ENCODE measurements at regions of chr20 and their contacts with region 1.

Region 1: DNA sequence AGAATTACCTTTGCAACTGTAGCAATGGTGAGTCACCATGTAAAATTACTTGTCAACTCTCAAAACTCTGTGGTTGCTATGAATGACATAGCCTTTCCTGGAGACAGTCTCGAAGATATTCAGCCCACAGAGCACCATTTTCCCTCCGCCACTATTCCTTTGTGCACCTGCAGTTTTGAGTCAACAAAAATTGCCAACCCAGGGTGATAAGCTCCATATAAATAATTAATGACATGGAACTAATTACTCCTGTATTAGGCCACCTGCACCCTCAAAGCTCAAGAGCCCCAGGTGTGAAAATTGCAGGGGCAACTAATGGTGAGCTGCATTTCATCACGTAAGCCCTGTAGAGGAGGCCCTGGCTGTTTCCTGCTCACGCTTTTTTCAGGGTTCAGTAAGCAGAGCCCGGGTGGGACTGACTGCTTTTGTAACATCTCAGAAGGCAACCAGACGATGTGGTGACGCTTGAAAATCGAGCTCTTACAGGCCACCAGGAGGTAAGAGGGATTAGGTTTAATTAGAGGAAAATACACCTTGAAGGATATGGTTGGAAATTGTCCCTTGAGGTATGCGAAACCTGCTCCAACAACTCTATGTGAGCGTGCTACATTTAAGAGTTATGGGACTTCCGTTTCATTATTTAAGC is 70.8 kb downstream of the BMP2 start:
- DNase-seq: peak; percentile 25
- ATAC-seq: peak; percentile 84
- H3K4me3 ChIP-seq: no peak overlapping the region
- H3K27ac ChIP-seq: no peak overlapping the region
- H3K4me1 ChIP-seq: no peaks in the 10 kb centered on the region
- H3K27me3 ChIP-seq: no peaks in the 10 kb centered on the region
- CTCF ChIP-seq: no peak
- EP300 ChIP-seq: peak; percentile 18 to 60; a peak in 2 of 4 replicates
- POLR2A ChIP-seq: no peak
- RAD21 ChIP-seq: no peak

Region 2: DNA sequence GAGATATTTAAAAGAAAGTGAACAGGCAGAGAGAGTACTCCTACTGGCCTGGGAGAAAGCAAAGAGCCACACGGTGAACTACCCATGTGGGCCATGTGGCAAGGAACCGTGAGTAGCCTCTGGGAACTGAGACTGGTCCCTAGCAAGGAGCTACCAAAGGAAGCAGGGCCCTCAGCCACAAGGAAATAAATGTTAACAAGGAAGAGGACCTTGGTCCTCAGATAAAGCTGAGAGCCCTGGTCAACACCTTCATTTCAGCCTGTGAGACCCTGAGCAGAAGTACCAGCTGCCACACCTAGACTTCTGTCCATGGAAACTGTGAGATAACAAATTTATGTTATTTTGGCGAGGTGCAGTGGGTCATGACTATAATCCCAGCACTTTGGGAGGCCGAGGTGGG is 45.5 kb before region 1 on chr20:
- CTCF ChIA-PET with region 1: no interaction called
- POLR2A ChIA-PET with region 1: no interaction called
- RAD21 ChIA-PET with region 1: no interaction called
- SMC1A ChIA-PET with region 1: no interaction called
- in situ Hi-C with region 1: no loop called
- intact Hi-C with region 1: no loop called
- DNase-seq: no peak
- ATAC-seq: no peak
- H3K4me3 ChIP-seq: no peak overlapping the region
- H3K27ac ChIP-seq: no peak overlapping the region
- H3K4me1 ChIP-seq: no peaks in the 10 kb centered on the region
- H3K27me3 ChIP-seq: no peaks in the 10 kb centered on the region
- CTCF ChIP-seq: no peak
- EP300 ChIP-seq: no peak
- POLR2A ChIP-seq: no peak
- RAD21 ChIP-seq: no peak

Region 3: GRCh38 chr20:6855104-6855503 is 16.8 kb after region 1 on chr20:
- CTCF ChIA-PET with region 1: interaction called, 23 read pairs
- POLR2A ChIA-PET with region 1: interaction called, 61 read pairs
- RAD21 ChIA-PET with region 1: interaction called, 129 read pairs
- SMC1A ChIA-PET with region 1: interaction called, 270 read pairs
- in situ Hi-C with region 1: no loop called
- intact Hi-C with region 1: no loop called
- DNase-seq: no peak
- ATAC-seq: no peak; the same call in 2 of the 3 replicates
- H3K4me3 ChIP-seq: no peak overlapping the region
- H3K27ac ChIP-seq: no peak overlapping the region
- H3K4me1 ChIP-seq: no peaks in the 10 kb centered on the region
- H3K27me3 ChIP-seq: no peaks in the 10 kb centered on the region
- CTCF ChIP-seq: no peak
- EP300 ChIP-seq: no peak
- POLR2A ChIP-seq: no peak
- RAD21 ChIP-seq: no peak

Region 4: DNA sequence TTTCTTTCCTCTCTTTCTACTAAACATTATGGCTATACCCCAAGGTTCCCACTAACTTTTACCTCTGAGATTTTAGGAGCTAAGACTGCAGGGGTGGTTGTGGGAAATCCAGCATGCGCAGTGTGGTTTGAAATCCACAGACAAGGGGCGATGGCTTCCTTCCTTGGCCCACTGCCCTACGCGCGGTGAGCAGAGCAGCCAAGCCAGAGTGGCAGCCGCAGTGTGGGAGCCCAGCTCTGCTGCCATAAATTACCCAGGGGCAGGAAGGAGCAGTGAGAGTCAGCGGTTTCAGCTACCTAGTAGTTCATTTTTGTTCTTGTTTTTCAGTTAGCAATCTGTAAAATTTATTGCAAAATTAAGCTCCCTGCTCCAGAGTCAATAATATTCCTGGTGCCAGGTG is 30.6 kb after region 1 on chr20:
- CTCF ChIA-PET with region 1: interaction called, 16 read pairs
- POLR2A ChIA-PET with region 1: interaction called, 8 read pairs
- RAD21 ChIA-PET with region 1: interaction called, 52 read pairs
- SMC1A ChIA-PET with region 1: interaction called, 270 read pairs
- in situ Hi-C with region 1: no loop called
- intact Hi-C with region 1: no loop called
- DNase-seq: no peak
- ATAC-seq: peak; percentile 68
- H3K4me3 ChIP-seq: no peak overlapping the region
- H3K27ac ChIP-seq: no peak overlapping the region
- H3K4me1 ChIP-seq: no peaks in the 10 kb centered on the region
- H3K27me3 ChIP-seq: no peaks in the 10 kb centered on the region; a peak in 1 of 4 replicates
- CTCF ChIP-seq: no peak
- EP300 ChIP-seq: no peak
- POLR2A ChIP-seq: no peak
- RAD21 ChIP-seq: no peak

Region 5: DNA sequence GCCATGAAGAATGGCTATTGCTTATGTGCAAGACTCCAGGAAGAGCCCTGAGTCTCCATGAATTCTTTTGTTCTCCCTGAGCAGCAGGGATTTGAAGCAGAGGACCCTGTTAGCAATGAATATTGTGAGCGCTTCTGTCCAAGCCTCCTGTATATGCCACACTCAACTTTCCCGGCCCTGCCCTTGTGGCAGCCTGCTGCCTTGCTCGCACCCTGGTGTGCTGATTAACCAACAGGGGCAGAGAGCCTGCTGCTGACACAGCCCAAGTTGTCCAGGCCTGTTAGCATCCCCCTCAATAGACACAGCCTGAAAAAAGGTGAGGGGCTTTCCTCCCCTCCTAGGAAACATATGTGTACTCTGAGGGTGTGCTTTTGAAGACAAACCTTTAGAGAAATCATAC is 60.6 kb after region 1 on chr20:
- CTCF ChIA-PET with region 1: interaction called, 4 read pairs
- POLR2A ChIA-PET with region 1: no interaction called
- RAD21 ChIA-PET with region 1: interaction called, 4 read pairs
- SMC1A ChIA-PET with region 1: interaction called, 12 read pairs
- in situ Hi-C with region 1: no loop called
- intact Hi-C with region 1: no loop called
- DNase-seq: no peak
- ATAC-seq: peak; percentile 52
- H3K4me3 ChIP-seq: no peak overlapping the region
- H3K27ac ChIP-seq: no peak overlapping the region
- H3K4me1 ChIP-seq: no peaks in the 10 kb centered on the region
- H3K27me3 ChIP-seq: no peaks in the 10 kb centered on the region; a peak in 1 of 4 replicates
- CTCF ChIP-seq: no peak
- EP300 ChIP-seq: no peak
- POLR2A ChIP-seq: no peak
- RAD21 ChIP-seq: no peak

Region 6: GRCh38 chr20:6914986-6915385 is 76.7 kb after region 1 on chr20:
- CTCF ChIA-PET with region 1: interaction called, 57 read pairs
- POLR2A ChIA-PET with region 1: interaction called, 100 read pairs
- RAD21 ChIA-PET with region 1: interaction called, 197 read pairs
- SMC1A ChIA-PET with region 1: interaction called, 215 read pairs
- in situ Hi-C with region 1: no loop called
- intact Hi-C with region 1: no loop called
- DNase-seq: no peak
- ATAC-seq: peak; percentile 47
- H3K4me3 ChIP-seq: no peak overlapping the region
- H3K27ac ChIP-seq: no peak overlapping the region
- H3K4me1 ChIP-seq: no peaks in the 10 kb centered on the region
- H3K27me3 ChIP-seq: no peaks in the 10 kb centered on the region
- CTCF ChIP-seq: no peak
- EP300 ChIP-seq: no peak
- POLR2A ChIP-seq: no peak
- RAD21 ChIP-seq: no peak